Heart right ventricle (tissue), 16 donors: ENCODE measurements at regions of chr17 and their contacts with region 1.

Region 1: GRCh38 chr17:34721326-34721725 is 141.9 kb downstream of the TMEM132E start:
- DNase-seq: no peak
- ATAC-seq: no peak
- H3K4me3 ChIP-seq: no peak overlapping the region
- H3K27ac ChIP-seq: no peak overlapping the region
- H3K4me1 ChIP-seq: no peaks in the 10 kb centered on the region
- H3K27me3 ChIP-seq: peaks cover 0 to 32% (median 18%) of the 10 kb centered on the region in 7 donors
- CTCF ChIP-seq: no peak

Region 2: DNA sequence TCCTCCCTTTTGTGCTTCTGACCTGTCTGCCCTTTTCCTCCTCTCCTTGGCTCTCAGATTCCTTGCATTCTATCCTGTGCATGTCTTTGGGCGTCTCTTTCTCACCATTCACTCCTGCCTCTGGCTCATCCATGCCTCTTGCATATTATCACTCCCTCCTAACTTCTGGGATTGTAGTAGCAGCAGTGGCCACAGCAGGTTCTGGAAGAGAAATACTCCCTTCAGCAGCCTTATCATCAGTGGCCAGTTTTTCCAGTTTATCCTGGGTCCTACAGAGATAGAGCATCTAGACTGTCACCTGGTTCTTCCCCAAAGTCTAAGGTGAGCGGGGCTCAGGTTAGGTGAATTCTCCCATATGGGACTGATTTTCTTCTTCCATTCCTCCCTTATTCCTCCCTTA is 820.2 kb before region 1 on chr17:
- intact Hi-C with region 1: loop called in 1 of 10 experiments (anchors 10 kb)
- DNase-seq: no peak
- ATAC-seq: no peak
- H3K4me3 ChIP-seq: no peak overlapping the region
- H3K27ac ChIP-seq: no peak overlapping the region
- H3K4me1 ChIP-seq: no peaks in the 10 kb centered on the region
- H3K27me3 ChIP-seq: peaks cover 0 to 44% (median 12%) of the 10 kb centered on the region in 7 donors
- CTCF ChIP-seq: no peak

Region 3: GRCh38 chr17:34781571-34782108 is 60.3 kb after region 1 on chr17:
- intact Hi-C with region 1: loop called in 1 of 10 experiments (anchors 10 kb)
- DNase-seq: no peak
- ATAC-seq: no peak
- H3K4me3 ChIP-seq: no peak overlapping the region
- H3K27ac ChIP-seq: no peak overlapping the region
- H3K4me1 ChIP-seq: no peaks in the 10 kb centered on the region
- H3K27me3 ChIP-seq: peaks cover 0 to 7% (median 1%) of the 10 kb centered on the region in 7 donors
- CTCF ChIP-seq: no peak